ENCODE measurements at regions of chr9 and their contacts with region 1.

Region 1: DNA sequence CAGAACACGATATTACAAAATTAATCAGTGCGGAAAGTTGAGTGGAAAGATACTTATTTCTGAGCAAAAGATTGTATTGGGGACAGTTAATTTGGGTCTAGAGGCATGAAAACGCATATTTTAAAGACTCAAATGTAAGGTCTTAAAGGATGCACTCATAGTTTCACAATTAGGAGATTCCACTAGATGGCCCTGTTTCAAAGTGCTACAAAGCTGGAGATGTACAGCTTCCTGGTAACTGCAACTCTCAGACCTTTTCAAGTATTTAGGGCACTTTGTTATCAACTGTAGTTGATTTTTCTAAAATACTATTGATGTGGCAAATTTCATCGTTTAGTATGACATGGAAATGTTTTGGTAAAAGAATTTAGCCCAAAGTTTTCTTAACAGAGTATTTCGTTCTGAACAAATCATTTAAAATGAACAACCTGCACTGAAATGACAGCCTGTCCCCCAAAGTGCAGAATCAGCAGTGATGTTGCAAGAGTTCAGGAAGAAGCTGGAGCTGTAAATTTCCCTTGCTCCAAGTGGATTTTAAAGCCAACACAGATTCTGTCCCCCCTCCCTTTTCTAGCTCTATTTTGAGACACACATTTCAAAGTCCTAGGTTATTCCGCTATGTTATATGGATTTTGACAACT is 16.2 kb upstream of the NDUFB6 start:
- DNase-seq: peak; percentile 28
- ATAC-seq: peak; percentile 87
- H3K4me3 ChIP-seq: no peak overlapping the region
- H3K27ac ChIP-seq: no peak overlapping the region
- H3K4me1 ChIP-seq: no peaks in the 10 kb centered on the region
- H3K27me3 ChIP-seq: no peaks in the 10 kb centered on the region
- CTCF ChIP-seq: peak; percentile 61
- EP300 ChIP-seq: no peak
- POLR2A ChIP-seq: no peak
- RAD21 ChIP-seq: peak; percentile 18; the same call in 1 of the 2 replicates

Region 2: GRCh38 chr9:32703635-32704034 is 114.4 kb after region 1 on chr9:
- CTCF ChIA-PET with region 1: no interaction called
- POLR2A ChIA-PET with region 1: no interaction called
- in situ Hi-C with region 1: no loop called
- intact Hi-C with region 1: loop called (anchors 1 kb)
- DNase-seq: peak; percentile 5
- ATAC-seq: peak; percentile 83
- H3K4me3 ChIP-seq: no peak overlapping the region
- H3K27ac ChIP-seq: no peak overlapping the region
- H3K4me1 ChIP-seq: no peaks in the 10 kb centered on the region
- H3K27me3 ChIP-seq: peaks cover 0 to 30% of the 10 kb centered on the region in 2 experiments; a peak in 2 of 5 replicates
- CTCF ChIP-seq: peak; percentile 42
- EP300 ChIP-seq: no peak
- POLR2A ChIP-seq: no peak
- RAD21 ChIP-seq: no peak